WTC11 (cell line): ENCODE measurements at regions of chr1 and their contacts with region 1.

Region 1: DNA sequence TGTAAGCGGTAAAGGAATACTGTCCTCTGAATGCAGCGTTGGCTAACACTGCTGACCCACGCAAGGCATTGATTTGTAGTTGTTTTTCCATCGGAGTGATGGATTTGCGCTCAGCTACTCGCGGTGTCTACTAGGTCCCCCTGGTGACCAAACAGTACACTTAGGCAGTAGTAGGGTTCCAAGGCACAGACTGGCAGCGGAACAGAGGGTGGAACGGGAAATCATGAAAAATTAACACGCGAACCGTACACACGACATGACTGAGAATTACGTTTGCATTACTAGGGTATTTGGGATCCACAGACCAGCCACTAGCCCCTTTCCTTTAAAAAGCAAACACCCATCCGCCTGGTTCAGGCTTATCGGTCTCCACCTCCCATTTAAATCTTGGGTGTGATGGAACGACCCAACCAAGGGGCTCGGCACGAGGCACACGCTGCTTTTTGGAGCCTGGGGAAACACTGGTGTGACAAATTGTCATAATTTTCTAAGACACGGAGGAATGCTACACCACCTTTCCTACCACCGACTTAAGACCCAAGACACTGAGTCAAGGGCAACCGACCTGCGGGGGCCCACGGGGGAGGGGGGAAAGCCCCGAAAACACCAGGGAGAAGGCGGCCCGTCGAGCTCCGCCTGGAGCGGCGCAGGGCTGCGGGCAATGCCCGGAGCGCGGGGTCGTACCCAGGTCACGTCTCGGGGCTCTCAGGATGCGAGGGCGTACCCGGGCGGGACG is 699 bp downstream of the DIPK1A start:
- DNase-seq: peak; percentile 23
- ATAC-seq: peak; percentile 37
- H3K4me3 Mint-ChIP-seq: peak overlapping the region; percentile 87
- H3K27ac Mint-ChIP-seq: no peak overlapping the region
- H3K4me1 Mint-ChIP-seq: peaks cover 13% of the 10 kb centered on the region
- H3K27me3 Mint-ChIP-seq: peaks cover 9% of the 10 kb centered on the region
- CTCF ChIP-seq: no peak

Region 2: GRCh38 chr1:92858564-92859399 is 101.8 kb before region 1 on chr1:
- CTCF ChIA-PET with region 1: interaction called, 19 read pairs
- POLR2A ChIA-PET with region 1: no interaction called
- DNase-seq: peak; percentile 41
- ATAC-seq: peak; percentile 85
- H3K4me3 Mint-ChIP-seq: no peak overlapping the region
- H3K27ac Mint-ChIP-seq: no peak overlapping the region
- H3K4me1 Mint-ChIP-seq: no peaks in the 10 kb centered on the region
- H3K27me3 Mint-ChIP-seq: no peaks in the 10 kb centered on the region
- CTCF ChIP-seq: peak; percentile 79

Region 3: DNA sequence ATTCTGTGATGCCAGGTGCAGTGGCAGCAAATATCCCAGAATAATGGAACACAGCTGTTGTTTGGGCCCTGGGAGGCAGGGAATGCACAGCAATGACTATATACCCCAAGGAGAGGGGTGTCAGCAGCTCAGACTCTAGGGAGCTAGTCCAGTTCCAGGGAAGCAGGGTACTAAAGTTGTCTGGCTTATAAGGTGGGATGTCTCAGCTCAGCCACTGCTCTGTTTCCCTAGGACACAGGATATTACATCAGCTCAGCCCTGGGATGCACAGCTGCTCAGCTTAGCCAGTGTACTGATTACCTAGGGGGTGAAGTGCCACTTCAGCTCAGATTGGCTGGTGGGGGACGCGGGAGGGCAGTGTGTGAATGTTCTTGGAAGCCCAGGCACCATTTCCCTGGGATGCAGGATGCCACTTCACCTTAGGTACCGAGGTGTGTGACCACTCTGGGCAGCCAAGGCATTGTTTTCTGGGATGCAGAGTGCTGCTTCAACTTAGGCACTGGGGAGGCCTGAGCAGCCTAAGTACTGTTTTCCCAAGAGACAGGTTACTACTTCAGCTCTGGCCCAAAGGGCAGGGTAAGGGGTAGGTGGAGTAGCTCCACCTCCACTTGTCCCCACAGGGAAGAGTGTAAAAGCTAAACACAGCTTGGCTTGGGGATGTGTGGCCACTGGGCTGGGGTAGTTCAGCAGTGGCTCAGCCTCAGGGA is 58.7 kb before region 1 on chr1:
- CTCF ChIA-PET with region 1: interaction called, 4 read pairs
- POLR2A ChIA-PET with region 1: interaction called, 12 read pairs
- DNase-seq: no peak
- ATAC-seq: no peak
- H3K4me3 Mint-ChIP-seq: no peak overlapping the region
- H3K27ac Mint-ChIP-seq: no peak overlapping the region
- H3K4me1 Mint-ChIP-seq: no peaks in the 10 kb centered on the region
- H3K27me3 Mint-ChIP-seq: no peaks in the 10 kb centered on the region; the same call in 1 of the 2 replicates
- CTCF ChIP-seq: no peak

Region 4: DNA sequence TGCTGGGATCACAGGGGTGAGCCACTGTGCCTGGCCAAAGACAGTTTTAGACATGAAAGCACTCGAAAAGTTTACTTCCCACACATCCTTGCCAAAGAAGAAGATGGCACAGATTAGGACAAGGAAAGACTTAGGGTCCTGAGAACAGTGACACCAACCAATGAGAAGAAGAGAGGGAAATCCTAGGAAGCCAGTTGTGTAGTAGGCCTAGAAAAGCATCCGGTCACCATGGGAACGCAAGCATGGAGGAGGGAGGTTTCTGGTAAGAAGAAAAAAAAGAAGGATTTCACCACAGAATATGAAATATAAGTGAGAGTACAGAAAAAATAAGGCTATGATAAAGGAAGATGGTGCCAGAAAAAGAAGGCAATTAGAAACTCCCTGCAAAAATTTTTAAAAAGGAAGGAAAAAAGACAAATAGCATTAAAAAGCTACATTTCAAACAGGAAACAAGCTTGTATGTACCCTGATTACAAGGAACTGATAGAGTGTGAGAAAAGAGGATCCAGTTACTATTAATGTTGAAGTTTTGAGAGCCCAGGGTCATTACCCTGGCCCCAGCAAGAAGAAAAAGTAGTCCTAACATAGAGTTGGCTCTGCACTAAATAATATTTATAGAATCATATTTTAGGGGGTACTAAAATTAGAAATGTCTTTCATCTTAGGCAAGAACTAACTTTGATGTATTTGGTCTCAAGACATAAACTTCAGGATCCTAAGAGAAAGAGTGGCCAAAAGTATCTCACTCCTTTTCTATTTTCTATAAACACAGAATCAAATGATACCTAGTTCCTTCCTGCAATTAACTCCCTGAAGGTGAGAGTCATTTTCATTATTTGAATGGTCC is 15.4 kb before region 1 on chr1:
- CTCF ChIA-PET with region 1: interaction called, 10 read pairs
- POLR2A ChIA-PET with region 1: no interaction called
- DNase-seq: no peak
- ATAC-seq: peak; percentile 78
- H3K4me3 Mint-ChIP-seq: no peak overlapping the region
- H3K27ac Mint-ChIP-seq: no peak overlapping the region
- H3K4me1 Mint-ChIP-seq: 0 out of 2 replicates have a peak, but pooled peaks cover 6% of the 10 kb centered on the region
- H3K27me3 Mint-ChIP-seq: no peaks in the 10 kb centered on the region
- CTCF ChIP-seq: no peak